ENCODE measurements at regions of chr22 and their contacts with region 1.

Region 1: GRCh38 chr22:27880778-27881394 is 38.2 kb downstream of the PITPNB start:
- H3K4me3 ChIP-seq: no peak overlapping the region
- H3K27ac ChIP-seq: no peak overlapping the region
- H3K4me1 ChIP-seq: peaks cover 14% of the 10 kb centered on the region
- CTCF ChIP-seq: no peak; the same call in 1 of the 2 replicates

Region 2: DNA sequence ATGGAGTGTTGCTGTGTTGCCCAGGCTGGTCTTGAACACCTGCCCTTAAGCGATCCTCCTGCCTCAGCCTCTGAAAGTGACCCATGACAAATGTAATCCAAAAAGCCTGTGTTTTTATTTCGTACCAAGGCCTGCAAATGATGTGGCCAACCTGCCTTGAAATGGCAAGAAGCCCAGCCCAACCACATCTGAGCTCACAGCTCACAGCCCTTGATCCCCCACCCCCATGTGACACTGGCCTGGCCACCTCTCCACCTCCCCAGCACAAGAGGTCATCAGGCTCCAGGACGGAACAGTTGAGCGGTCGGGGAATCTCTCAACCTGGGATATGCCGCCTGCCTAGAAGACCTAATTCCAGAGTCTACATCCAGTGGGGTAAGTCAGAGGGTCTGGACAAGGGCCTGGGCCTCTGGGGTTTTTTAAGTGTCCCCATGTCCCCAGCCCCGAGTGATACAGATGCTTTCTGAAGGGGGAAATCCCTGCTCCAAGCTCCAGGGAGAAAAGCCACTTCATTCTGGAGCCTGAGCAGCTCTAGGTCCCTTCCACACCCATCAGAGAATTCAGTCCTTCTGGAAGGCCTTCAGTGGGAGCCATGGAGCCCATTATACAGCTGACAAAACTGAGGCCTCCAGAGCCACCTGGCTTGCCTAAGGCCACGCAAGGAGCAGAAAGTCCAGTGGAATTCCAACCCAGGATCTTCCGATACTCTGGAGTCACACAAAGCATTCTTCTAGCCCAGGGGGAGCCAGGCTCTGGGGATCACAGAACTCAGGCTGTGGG is 150.0 kb before region 1 on chr22:
- CTCF ChIA-PET with region 1: no interaction called
- POLR2A ChIA-PET with region 1: no interaction called
- H3K4me3 ChIP-seq: no peak overlapping the region
- H3K27ac ChIP-seq: no peak overlapping the region
- H3K4me1 ChIP-seq: peaks cover 5% of the 10 kb centered on the region; the same call in 1 of the 2 replicates
- CTCF ChIP-seq: no peak

Region 3: GRCh38 chr22:27800250-27801131 is 80.4 kb before region 1 on chr22:
- CTCF ChIA-PET with region 1: no interaction called
- POLR2A ChIA-PET with region 1: no interaction called
- H3K4me3 ChIP-seq: peak overlapping the region; percentile 74
- H3K27ac ChIP-seq: peak overlapping the region; percentile 84
- H3K4me1 ChIP-seq: peaks cover 5% of the 10 kb centered on the region; the same call in 1 of the 2 replicates
- CTCF ChIP-seq: no peak

Region 4: DNA sequence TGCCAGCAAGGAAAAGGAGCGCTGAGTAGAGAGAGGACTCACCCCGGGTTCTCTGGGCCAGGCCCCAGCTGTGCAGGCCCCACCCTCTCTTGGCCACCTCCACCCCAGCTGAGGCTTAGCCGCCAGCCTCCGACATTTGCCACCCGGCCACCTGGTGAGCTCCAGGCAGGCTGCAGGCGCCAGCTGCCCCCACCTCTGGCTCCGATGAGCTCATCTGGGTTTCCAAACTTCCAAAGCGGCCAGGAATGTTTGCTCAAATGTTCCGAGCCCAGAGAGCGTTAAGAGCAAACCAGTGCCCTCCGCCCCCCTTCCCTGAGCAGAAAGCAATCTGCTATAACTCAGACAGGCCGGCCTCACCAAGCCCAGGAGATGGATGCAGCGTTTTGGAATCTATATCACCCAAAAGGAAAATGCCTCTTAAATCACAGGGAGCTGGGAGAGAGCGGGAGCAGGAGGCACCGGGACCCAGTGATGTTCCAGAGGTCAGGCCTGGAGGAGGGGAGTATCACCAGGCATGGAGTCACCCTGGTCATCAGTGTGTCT is 70.2 kb before region 1 on chr22:
- CTCF ChIA-PET with region 1: no interaction called
- POLR2A ChIA-PET with region 1: no interaction called
- H3K4me3 ChIP-seq: no peak overlapping the region
- H3K27ac ChIP-seq: no peak overlapping the region
- H3K4me1 ChIP-seq: no peaks in the 10 kb centered on the region
- CTCF ChIP-seq: no peak

Region 5: GRCh38 chr22:27866132-27867086 is 14.5 kb before region 1 on chr22:
- CTCF ChIA-PET with region 1: interaction called, 18 read pairs
- POLR2A ChIA-PET with region 1: interaction called, 3 read pairs
- H3K4me3 ChIP-seq: no peak overlapping the region
- H3K27ac ChIP-seq: no peak overlapping the region
- H3K4me1 ChIP-seq: peaks cover 23% of the 10 kb centered on the region
- CTCF ChIP-seq: no peak

Region 6: DNA sequence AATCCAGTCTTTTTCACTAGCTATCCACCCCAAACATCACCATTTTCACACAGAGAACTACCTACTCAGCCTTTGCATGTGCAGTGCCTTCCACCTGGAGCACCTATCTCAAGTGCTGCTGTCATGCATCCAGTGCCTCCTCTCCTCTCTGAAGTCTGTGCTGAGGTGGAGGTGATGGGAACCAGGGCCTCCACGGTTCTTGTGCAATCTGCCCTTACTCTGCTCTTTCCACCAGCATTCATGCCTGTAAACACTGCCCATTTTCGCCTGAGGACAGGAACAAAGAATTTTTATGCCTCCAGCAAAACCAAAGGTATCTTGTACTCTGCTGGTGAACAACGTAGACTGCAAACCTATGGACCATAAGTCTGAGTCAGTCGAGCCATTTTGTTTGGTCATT is 11.2 kb after region 1 on chr22:
- CTCF ChIA-PET with region 1: interaction called, 19 read pairs
- POLR2A ChIA-PET with region 1: interaction called, 3 read pairs
- H3K4me3 ChIP-seq: no peak overlapping the region
- H3K27ac ChIP-seq: no peak overlapping the region
- H3K4me1 ChIP-seq: 0 out of 2 replicates have a peak, but pooled peaks cover under 1% of the 10 kb centered on the region
- CTCF ChIP-seq: no peak

Region 7: DNA sequence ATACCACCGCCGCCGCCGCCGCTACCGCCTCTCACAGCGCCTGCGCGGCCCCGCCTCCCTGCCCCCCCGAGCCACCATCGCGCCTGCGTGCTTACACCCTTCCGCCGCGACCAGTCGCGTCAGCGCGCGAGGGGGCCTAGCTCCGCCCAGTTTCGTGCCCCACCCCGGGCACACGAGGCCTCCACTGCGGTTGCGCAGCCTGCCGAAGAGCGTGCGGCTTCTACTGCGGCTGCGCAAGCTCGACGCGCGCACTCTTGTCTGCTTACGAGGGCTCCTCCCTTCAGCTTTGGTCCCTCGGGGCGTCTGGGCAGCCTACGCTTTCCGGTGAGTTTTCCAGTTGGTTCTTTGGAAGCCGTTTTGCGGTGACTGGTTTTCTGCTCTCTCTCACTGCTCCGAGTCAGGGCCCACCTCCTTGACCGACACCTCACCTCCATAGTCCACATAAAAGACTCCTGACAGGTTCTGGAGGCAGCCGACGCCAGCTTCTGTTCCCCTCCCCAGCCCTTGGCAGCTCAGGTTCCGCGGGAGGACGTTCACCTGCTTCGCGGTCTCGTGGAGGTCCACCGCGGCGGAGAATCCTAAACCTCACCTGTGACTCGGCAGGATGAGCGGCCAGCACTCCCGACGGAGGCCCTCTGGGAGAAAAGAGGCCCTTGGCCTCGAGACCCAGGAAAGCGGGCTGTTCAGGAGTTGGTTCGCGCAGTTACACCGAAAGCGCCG is 38.5 kb after region 1 on chr22 and contains the start of gene PITPNB:
- CTCF ChIA-PET with region 1: interaction called, 90 read pairs
- POLR2A ChIA-PET with region 1: interaction called, 5 read pairs
- H3K4me3 ChIP-seq: peak within 1 kb of the TSS; percentile 72
- H3K27ac ChIP-seq: peak within 1 kb of the TSS; percentile 98
- H3K4me1 ChIP-seq: peaks cover 29% of the 10 kb centered on the region
- CTCF ChIP-seq: no peak

Region 8: GRCh38 chr22:27947448-27947847 is 66.6 kb after region 1 on chr22:
- CTCF ChIA-PET with region 1: interaction called, 16 read pairs
- POLR2A ChIA-PET with region 1: no interaction called
- H3K4me3 ChIP-seq: no peak overlapping the region
- H3K27ac ChIP-seq: no peak overlapping the region
- H3K4me1 ChIP-seq: peaks cover 2% of the 10 kb centered on the region
- CTCF ChIP-seq: no peak

Region 9: DNA sequence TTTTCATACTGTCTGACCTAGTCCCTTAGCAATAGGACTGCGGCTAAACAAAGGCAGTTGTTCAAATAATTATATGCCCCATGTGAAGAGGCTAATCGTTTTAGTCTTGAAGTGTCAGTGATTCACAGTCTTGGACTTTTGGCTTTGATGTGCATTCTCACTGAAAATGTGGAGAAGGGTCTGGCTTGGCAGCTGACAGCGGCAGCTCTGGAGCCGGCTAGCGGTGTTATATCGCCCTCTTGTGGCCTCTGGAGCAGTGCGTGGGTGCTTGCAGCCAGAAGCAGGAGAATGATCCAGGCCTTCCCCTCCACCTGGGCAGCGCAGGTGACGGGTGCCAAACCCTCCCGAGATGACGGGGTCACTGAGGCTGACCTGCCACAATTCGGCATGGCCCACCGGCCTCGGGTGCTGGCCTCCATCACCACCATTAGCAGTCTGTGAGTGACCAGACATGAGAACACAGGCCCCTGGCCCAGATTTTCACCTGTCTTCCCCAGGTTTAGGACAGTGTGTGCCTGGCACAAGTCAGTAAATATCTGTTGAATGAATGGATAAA is 128.5 kb after region 1 on chr22:
- CTCF ChIA-PET with region 1: interaction called, 61 read pairs
- POLR2A ChIA-PET with region 1: no interaction called
- H3K4me3 ChIP-seq: no peak overlapping the region
- H3K27ac ChIP-seq: no peak overlapping the region
- H3K4me1 ChIP-seq: no peaks in the 10 kb centered on the region
- CTCF ChIP-seq: peak; percentile 93